ENCODE measurements at regions of chr16 and their contacts with region 1.

Region 1: DNA sequence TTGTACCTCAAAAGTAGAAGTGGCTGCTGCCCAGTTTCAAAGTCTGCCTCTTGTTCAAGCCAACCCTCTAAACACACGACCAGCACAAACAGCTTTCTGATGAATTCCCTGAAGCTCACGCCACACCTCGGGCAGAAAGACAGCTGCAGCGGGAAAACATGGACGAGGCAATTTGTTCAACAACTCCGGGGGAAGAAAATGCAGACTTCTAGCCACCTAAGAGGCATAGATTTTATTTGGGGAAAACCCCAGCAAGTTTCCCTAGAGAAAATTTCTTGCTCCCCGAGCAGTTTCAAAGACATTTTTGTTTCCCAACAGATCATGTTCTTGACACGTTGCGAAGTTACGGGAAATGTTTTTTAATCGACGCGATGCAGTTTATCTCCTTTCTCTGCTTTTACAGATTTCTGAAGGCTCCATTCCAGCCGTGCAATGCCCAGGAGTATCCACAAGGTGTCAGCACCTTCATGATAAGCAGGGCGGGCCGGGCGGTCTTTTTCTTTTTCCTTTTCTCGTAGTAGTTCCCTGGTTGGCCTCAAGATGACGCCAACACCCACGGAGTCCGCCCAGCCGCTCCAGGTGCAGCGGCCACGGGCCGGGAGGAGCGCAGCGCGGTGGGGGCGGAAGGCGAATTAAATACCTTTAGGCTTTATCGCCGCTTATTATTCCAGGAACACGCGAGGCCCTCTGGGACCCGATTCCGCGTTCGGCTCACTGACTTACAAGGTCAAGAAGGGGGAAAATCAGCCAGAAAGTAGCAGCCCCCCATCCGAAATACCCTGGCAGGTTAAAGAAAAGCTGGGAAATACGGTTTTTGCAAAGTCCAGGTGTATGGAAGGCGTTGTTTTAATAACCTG is 2.9 kb upstream of the FOXC2 start:
- DNase-seq: peak; percentile 88
- H3K4me3 Mint-ChIP-seq: peak overlapping the region; percentile 67
- H3K27ac Mint-ChIP-seq: peak overlapping the region; percentile 23
- H3K4me1 Mint-ChIP-seq: peaks cover 10% of the 10 kb centered on the region
- H3K27me3 Mint-ChIP-seq: no peaks in the 10 kb centered on the region
- CTCF ChIP-seq: peak; percentile 100

Region 2: GRCh38 chr16:86823895-86824671 is 260.4 kb after region 1 on chr16:
- CTCF ChIA-PET with region 1: no interaction called
- POLR2A ChIA-PET with region 1: interaction called, 4 read pairs
- intact Hi-C with region 1: loop called (anchors 5 kb)
- DNase-seq: peak; percentile 92
- H3K4me3 Mint-ChIP-seq: peak overlapping the region; percentile 57
- H3K27ac Mint-ChIP-seq: peak overlapping the region; percentile 85
- H3K4me1 Mint-ChIP-seq: peaks cover 42% of the 10 kb centered on the region
- H3K27me3 Mint-ChIP-seq: no peaks in the 10 kb centered on the region
- CTCF ChIP-seq: no peak

Region 3: DNA sequence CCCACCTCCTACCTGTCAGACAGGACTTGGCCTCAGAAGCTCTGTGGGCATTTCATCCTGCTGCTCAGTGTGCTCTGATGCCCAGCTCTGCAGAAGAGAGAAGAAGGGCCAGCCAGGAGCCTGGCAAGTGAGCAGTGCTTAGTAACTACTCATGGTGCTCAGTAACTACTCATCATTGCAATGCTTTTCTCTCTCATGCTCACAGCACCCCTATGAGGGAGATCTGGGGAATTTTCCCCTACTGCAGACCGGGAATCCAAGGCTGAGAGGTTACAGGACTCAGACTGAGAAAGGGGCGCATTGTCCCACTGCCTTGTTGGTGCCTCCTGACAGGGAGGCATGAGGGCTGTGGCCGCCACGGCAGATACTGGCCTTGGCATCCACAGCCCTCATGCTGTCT is 492.4 kb after region 1 on chr16:
- CTCF ChIA-PET with region 1: interaction called, 88 read pairs
- POLR2A ChIA-PET with region 1: no interaction called
- intact Hi-C with region 1: loop called (anchors 1 kb)
- DNase-seq: peak; percentile 24
- H3K4me3 Mint-ChIP-seq: no peak overlapping the region
- H3K27ac Mint-ChIP-seq: no peak overlapping the region
- H3K4me1 Mint-ChIP-seq: no peaks in the 10 kb centered on the region
- H3K27me3 Mint-ChIP-seq: no peaks in the 10 kb centered on the region
- CTCF ChIP-seq: peak; percentile 14

Region 4: GRCh38 chr16:87203060-87203656 is 639.4 kb after region 1 on chr16:
- CTCF ChIA-PET with region 1: interaction called, 20 read pairs
- POLR2A ChIA-PET with region 1: interaction called, 4 read pairs
- intact Hi-C with region 1: loop called (anchors 5 kb)
- DNase-seq: peak; percentile 79
- H3K4me3 Mint-ChIP-seq: no peak overlapping the region
- H3K27ac Mint-ChIP-seq: no peak overlapping the region
- H3K4me1 Mint-ChIP-seq: peaks cover 39% of the 10 kb centered on the region
- H3K27me3 Mint-ChIP-seq: no peaks in the 10 kb centered on the region
- CTCF ChIP-seq: peak; percentile 82

Region 5: DNA sequence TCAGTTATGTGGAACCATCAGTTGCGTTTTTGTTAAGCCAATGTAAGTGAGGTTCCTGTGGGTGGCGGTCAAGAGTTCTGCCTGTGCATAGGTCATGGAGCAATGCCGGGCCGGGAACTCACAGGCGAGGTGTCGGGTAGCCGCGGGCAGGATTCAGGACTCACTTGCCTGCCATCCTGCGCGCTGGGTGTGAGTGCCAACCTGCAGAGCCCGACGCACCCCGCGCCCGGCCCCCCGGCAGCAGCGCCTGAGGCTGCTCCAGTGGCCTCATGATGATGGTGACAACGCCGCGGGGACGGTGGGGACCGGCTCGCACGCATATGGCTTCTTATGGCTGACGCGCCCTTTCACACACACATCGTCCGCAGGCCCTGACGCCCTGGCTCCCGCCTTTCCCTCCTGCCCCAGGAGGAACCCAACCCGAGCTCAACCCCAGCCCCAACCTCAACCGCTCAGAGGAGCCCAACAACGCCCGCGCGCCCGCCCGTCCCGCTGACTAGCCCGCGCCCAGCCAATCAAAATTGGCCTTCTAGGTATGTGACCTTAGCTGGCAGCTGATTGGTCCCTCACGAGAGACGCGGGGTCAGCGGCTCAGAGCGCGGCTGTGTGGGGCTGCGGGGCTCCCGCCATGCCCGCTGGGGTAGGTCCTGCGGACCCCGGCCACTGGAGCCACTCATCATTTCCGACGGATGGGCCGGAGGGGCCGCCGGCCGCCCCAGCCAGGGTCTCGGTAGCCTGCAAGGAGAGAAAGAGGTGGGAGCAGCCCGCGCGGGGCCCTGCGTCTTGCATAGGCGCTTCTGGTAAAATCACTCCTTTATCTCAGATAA is 753.4 kb after region 1 on chr16 and contains the start of gene C16orf95:
- CTCF ChIA-PET with region 1: interaction called, 4 read pairs
- POLR2A ChIA-PET with region 1: interaction called, 16 read pairs
- intact Hi-C with region 1: no loop called
- DNase-seq: peak; percentile 95
- H3K4me3 Mint-ChIP-seq: peak within 1 kb of the TSS; percentile 83
- H3K27ac Mint-ChIP-seq: peak within 1 kb of the TSS; percentile 93
- H3K4me1 Mint-ChIP-seq: peaks cover 6% of the 10 kb centered on the region
- H3K27me3 Mint-ChIP-seq: no peaks in the 10 kb centered on the region
- CTCF ChIP-seq: peak; percentile 50
- total RNA-seq, gene C16orf95: 5.7 and 5.8 TPM in 2 replicates

Measured in MCF 10A (cell line).